Activated CD4-positive, alpha-beta T cell treated with anti-CD3 and anti-CD28 coated beads, Interleukin-2, amount 10 ng/mL, durations not matched to agents 7 days and 5 days (primary cell): ENCODE measurements at regions of chr5 and their contacts with region 1.

Region 1: DNA sequence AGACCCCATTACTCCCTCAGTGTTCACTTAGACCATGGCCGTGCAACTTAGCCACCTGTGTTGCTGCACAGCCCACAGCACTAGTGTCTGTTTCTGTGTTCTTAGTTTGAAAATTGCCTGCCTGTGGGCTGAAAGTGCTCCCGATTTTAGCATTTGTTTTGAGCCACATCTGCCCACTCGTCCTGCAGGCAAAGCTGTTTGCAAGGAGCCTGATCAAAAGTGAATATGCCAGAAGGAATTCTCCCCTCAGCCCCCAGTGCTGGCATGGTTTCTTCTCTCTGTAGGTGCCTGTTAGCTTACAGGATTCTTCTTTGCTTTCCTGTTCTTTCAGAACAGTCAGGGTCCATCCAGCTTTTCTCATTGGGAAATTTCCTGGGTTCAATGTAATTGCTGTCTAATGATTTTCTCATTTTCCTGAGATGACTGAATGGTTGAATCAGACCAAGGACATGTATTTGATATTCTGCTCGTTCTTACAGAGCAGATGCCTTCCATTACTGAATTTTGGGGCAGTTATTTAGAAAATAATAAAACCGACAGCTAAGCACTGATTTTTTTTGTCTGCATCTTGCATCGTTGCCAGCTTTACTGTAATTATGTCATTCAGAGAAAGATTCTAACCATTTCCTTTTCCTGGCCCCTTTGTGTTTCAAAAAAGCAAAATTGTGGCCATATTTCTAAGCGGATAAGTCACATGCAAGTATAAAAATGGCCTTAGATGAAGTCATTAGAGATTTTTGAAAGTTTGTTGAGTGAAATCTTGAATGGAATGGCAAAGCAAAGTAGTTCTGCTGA is 111.1 kb upstream of the CKMT2 start:
- DNase-seq: no peak
- H3K4me3 Mint-ChIP-seq: no peak overlapping the region
- H3K27ac Mint-ChIP-seq: no peak overlapping the region
- H3K4me1 Mint-ChIP-seq: peaks cover 12% of the 10 kb centered on the region
- H3K27me3 Mint-ChIP-seq: no peaks in the 10 kb centered on the region

Region 2: DNA sequence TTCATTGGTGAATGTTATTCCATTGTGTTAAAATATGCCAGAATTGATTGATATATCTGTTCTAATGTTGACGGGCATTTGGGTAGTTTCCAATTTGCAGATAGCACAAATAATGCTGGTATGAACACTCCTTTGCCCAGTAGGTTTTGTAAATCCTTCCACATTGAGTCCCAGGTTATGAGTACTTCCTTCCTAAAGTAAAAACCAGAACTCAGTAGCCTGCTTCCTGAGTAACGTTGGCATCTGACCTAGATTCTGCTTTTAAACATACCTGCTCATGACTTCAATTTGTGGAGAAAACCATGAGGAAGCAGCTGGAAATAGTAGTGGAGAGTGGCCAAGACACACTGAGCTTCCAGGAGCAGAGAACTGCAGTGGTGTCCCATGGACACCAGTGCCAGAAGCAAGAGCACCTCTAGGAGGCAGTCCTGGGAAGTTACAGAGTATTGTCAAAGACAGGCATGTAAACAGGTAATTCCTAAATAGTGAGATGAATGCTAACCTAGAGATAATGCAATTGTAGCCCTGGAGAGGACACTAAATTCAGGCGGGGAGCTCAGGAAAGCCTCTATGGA is 186.1 kb before region 1 on chr5:
- CTCF ChIA-PET with region 1: no interaction called
- POLR2A ChIA-PET with region 1: no interaction called
- DNase-seq: no peak
- H3K4me3 Mint-ChIP-seq: no peak overlapping the region
- H3K27ac Mint-ChIP-seq: no peak overlapping the region
- H3K4me1 Mint-ChIP-seq: peaks cover 3% of the 10 kb centered on the region
- H3K27me3 Mint-ChIP-seq: no peaks in the 10 kb centered on the region

Region 3: GRCh38 chr5:81006947-81007636 is 114.9 kb before region 1 on chr5:
- CTCF ChIA-PET with region 1: no interaction called
- POLR2A ChIA-PET with region 1: no interaction called
- DNase-seq: peak; percentile 78
- H3K4me3 Mint-ChIP-seq: peak overlapping the region; percentile 69
- H3K27ac Mint-ChIP-seq: peak overlapping the region; percentile 92
- H3K4me1 Mint-ChIP-seq: peaks cover 64% of the 10 kb centered on the region
- H3K27me3 Mint-ChIP-seq: no peaks in the 10 kb centered on the region

Region 4: DNA sequence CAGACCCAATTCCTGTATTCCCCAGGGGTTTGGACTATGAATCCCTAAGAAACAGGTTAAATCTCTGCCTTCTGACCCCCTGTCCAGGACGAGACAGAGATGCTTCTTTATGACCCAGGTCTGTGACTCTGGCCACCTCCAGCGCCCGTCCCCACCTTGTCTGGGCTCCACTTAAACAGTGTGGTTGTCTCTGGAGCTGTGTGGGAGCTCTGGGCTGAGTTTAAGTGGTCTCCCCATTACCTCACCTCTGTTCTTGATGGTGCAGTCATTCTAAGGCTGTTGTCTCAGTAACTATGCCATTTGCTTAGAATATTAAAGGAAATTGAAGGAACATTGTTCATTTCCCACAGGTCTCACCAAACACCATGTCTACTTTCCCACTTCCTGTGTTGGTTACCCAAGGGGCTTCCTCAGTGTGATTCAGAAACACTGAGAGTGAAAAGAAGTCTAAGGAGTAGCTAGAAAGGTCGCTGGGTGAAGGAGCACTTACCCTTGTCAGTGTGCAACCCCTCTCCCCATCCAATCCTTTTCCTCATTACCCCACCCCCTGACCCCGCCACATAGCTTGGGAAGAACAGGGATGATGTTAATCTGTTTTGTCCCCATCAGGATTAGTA is 16.7 kb before region 1 on chr5:
- CTCF ChIA-PET with region 1: interaction called, 11 read pairs
- POLR2A ChIA-PET with region 1: no interaction called
- DNase-seq: no peak
- H3K4me3 Mint-ChIP-seq: no peak overlapping the region
- H3K27ac Mint-ChIP-seq: peak overlapping the region; percentile 6
- H3K4me1 Mint-ChIP-seq: peaks cover 20% of the 10 kb centered on the region
- H3K27me3 Mint-ChIP-seq: no peaks in the 10 kb centered on the region

Region 5: GRCh38 chr5:81268521-81269196 is 146.6 kb after region 1 on chr5:
- CTCF ChIA-PET with region 1: no interaction called
- POLR2A ChIA-PET with region 1: no interaction called
- DNase-seq: no peak
- H3K4me3 Mint-ChIP-seq: no peak overlapping the region
- H3K27ac Mint-ChIP-seq: no peak overlapping the region
- H3K4me1 Mint-ChIP-seq: peaks cover 9% of the 10 kb centered on the region
- H3K27me3 Mint-ChIP-seq: no peaks in the 10 kb centered on the region